ENCODE measurements at regions of chr16 and their contacts with region 1.

Region 1: GRCh38 chr16:3793161-3793576 is 75.8 kb upstream of the TRAP1 start:
- DNase-seq: no peak
- ATAC-seq: no peak
- H3K4me3 ChIP-seq: no peak overlapping the region
- H3K4me3 Mint-ChIP-seq: no peak overlapping the region
- H3K27ac ChIP-seq: no peak overlapping the region
- H3K27ac Mint-ChIP-seq: no peak overlapping the region
- H3K4me1 ChIP-seq: peaks cover 33% of the 10 kb centered on the region in 2 donors
- H3K4me1 Mint-ChIP-seq: peaks cover 57% of the 10 kb centered on the region
- H3K27me3 ChIP-seq: no peaks in the 10 kb centered on the region
- H3K27me3 Mint-ChIP-seq: no peaks in the 10 kb centered on the region
- CTCF ChIP-seq: no peak

Region 2: DNA sequence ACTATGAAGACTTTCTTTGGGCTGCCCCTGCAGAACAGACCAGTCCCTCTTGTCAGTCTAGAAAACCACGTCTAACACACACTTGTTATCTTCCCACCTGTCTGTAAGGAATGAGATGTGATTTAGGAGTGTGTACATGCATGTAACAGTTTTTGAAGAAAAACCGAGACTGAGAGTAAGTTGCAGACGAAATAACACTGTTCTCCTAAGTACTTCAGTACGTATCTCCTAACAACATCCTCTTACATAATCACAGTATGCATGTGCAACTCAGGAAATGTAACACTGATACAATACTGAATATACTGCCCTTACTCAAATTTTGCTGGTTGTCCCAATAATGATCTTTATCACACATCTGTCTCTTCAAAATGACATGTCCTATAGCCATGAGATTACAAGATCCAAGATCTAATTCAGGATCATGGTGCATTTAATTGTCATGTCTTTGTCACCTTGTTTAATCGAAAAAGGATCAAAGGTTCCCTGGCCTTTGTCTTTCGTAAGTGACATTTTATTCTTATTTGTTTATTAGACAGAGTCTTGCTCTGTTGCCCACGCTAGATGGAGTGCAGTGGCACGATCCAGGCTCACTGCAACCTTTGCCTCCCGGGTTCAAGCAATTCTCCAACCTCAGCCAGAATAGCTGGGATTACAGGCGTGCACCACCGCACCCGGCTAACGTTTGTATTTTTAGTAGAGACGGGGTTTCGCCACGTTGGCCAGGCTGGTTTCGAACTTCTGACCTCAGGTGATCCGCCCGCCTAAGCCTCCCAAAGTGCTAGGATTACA is 61.8 kb after region 1 on chr16:
- CTCF ChIA-PET with region 1: no interaction called
- POLR2A ChIA-PET with region 1: no interaction called
- intact Hi-C with region 1: loop called (anchors 2 kb)
- DNase-seq: no peak
- ATAC-seq: no peak
- H3K4me3 ChIP-seq: peak overlapping the region in 1 of 5 experiments; percentile 19
- H3K4me3 Mint-ChIP-seq: no peak overlapping the region
- H3K27ac ChIP-seq: peak overlapping the region in 1 of 2 donors; percentile 22
- H3K27ac Mint-ChIP-seq: peak overlapping the region; percentile 10
- H3K4me1 ChIP-seq: peaks cover 35 to 54% of the 10 kb centered on the region in 2 donors
- H3K4me1 Mint-ChIP-seq: peaks cover 63% of the 10 kb centered on the region
- H3K27me3 ChIP-seq: no peaks in the 10 kb centered on the region
- H3K27me3 Mint-ChIP-seq: no peaks in the 10 kb centered on the region
- CTCF ChIP-seq: no peak

Region 3: GRCh38 chr16:4972938-4973587 is 1179.9 kb after region 1 on chr16:
- CTCF ChIA-PET with region 1: no interaction called
- POLR2A ChIA-PET with region 1: interaction called, 12 read pairs
- intact Hi-C with region 1: no loop called
- DNase-seq: no peak
- ATAC-seq: no peak
- H3K4me3 ChIP-seq: no peak overlapping the region
- H3K4me3 Mint-ChIP-seq: no peak overlapping the region
- H3K27ac ChIP-seq: no peak overlapping the region
- H3K27ac Mint-ChIP-seq: no peak overlapping the region
- H3K4me1 ChIP-seq: peaks cover 14 to 15% of the 10 kb centered on the region in 2 donors
- H3K4me1 Mint-ChIP-seq: peaks cover 10% of the 10 kb centered on the region
- H3K27me3 ChIP-seq: peaks cover 0 to 17% (median 3%) of the 10 kb centered on the region in 4 experiments
- H3K27me3 Mint-ChIP-seq: peaks cover 13% of the 10 kb centered on the region
- CTCF ChIP-seq: no peak